Right cardiac atrium (tissue), 5 donors: ENCODE measurements at regions of chr17 and their contacts with region 1.

Region 1: DNA sequence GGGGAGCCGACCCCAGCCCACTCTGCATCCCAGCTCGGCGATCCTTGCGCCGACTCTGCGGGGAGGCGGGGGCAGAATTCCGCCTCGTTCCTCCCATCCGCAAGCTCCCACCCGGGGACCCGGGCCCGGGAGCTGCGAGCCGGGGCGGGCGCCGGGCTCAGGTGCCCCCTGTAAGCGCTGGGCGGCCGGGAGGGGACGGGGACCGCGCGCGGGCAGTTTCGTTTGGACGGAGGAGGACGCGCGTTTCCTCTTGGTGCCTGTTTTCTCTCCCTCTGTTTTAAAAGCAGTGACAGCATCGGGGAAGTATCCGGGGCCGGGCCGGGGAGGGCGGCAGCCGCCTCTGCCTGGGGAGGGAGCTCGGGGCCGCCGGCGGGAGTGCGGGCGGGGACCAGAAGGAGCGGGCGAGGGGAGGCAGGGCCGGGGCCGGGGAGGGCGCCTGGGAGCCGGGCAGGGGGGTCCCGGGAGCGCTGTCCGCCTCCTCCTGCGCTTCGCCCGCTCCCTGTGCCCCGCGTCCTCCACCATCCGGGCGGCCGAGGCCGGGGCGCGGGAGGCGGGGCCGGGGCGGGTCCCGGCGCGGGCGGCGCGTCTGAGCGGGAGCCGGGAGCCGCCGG is 57.0 kb downstream of the RAP1GAP2 start:
- DNase-seq: peak; percentile 46 to 83 (median 76)
- ATAC-seq: peak; percentile 50 to 53
- H3K4me3 ChIP-seq: peak overlapping the region; percentile 89
- H3K27ac ChIP-seq: peak overlapping the region; percentile 66
- H3K4me1 ChIP-seq: no peaks in the 10 kb centered on the region
- H3K27me3 ChIP-seq: no peaks in the 10 kb centered on the region

Region 2: GRCh38 chr17:2904152-2904551 is 50.9 kb after region 1 on chr17:
- intact Hi-C with region 1: loop called in 1 of 4 experiments (anchors 10 kb)
- DNase-seq: peak; percentile 69 to 88 (median 84)
- ATAC-seq: peak; percentile 70 to 76
- H3K4me3 ChIP-seq: no peak overlapping the region
- H3K27ac ChIP-seq: peak overlapping the region; percentile 88
- H3K4me1 ChIP-seq: peaks cover 7% of the 10 kb centered on the region
- H3K27me3 ChIP-seq: no peaks in the 10 kb centered on the region

Region 3: GRCh38 chr17:2911035-2911754 is 58.0 kb after region 1 on chr17:
- intact Hi-C with region 1: loop called in 2 of 4 experiments (anchors 10 kb)
- DNase-seq: peak in 2 of 3 donors; percentile 70 to 73
- ATAC-seq: peak in 1 of 2 donors; percentile 46
- H3K4me3 ChIP-seq: no peak overlapping the region
- H3K27ac ChIP-seq: peak overlapping the region; percentile 32
- H3K4me1 ChIP-seq: no peaks in the 10 kb centered on the region
- H3K27me3 ChIP-seq: no peaks in the 10 kb centered on the region

Region 4: GRCh38 chr17:2929881-2930533 is 76.8 kb after region 1 on chr17:
- intact Hi-C with region 1: loop called in 2 of 4 experiments (anchors 5 to 10 kb)
- DNase-seq: peak in 1 of 3 donors; percentile 20
- ATAC-seq: peak; percentile 61 to 64
- H3K4me3 ChIP-seq: no peak overlapping the region
- H3K27ac ChIP-seq: no peak overlapping the region
- H3K4me1 ChIP-seq: no peaks in the 10 kb centered on the region
- H3K27me3 ChIP-seq: no peaks in the 10 kb centered on the region

Region 5: GRCh38 chr17:3004925-3005324 is 151.7 kb after region 1 on chr17:
- intact Hi-C with region 1: loop called in 2 of 4 experiments (anchors 2 to 5 kb)
- DNase-seq: no peak
- ATAC-seq: peak in 1 of 2 donors; percentile 26
- H3K4me3 ChIP-seq: no peak overlapping the region
- H3K27ac ChIP-seq: no peak overlapping the region
- H3K4me1 ChIP-seq: peaks cover 14% of the 10 kb centered on the region
- H3K27me3 ChIP-seq: no peaks in the 10 kb centered on the region